ENCODE measurements at regions of chr9 and their contacts with region 1.

Region 1: GRCh38 chr9:70484210-70485130 is 70.0 kb upstream of the KLF9 start:
- DNase-seq: peak; percentile 53
- ATAC-seq: peak; percentile 89
- H3K4me3 ChIP-seq: no peak overlapping the region
- H3K27ac ChIP-seq: no peak overlapping the region
- H3K4me1 ChIP-seq: 0 out of 2 replicates have a peak, but pooled peaks cover 5% of the 10 kb centered on the region
- H3K27me3 ChIP-seq: no peaks in the 10 kb centered on the region
- CTCF ChIP-seq: peak; percentile 66

Region 2: DNA sequence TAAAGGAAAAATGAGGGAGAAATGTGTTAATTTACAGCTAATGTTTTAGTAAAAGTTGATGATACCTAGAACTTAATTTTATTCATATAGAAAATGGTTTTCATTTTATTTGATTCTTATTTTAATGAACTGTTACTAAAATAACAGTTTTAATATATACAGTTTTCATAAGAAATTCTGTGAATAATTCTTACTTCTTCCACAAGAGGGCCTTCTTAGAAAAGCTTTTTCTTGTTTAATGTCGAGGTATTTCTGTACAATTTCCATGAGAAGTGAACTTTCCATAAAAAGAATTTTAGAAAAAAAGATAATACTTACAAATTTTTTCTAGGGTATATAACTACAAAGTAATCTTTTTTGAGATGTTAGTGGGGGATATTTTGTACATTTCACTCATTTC is 143.9 kb before region 1 on chr9:
- CTCF ChIA-PET with region 1: no interaction called
- POLR2A ChIA-PET with region 1: no interaction called
- intact Hi-C with region 1: loop called (anchors 5 kb)
- DNase-seq: peak; percentile 40
- ATAC-seq: no peak
- H3K4me3 ChIP-seq: no peak overlapping the region
- H3K27ac ChIP-seq: no peak overlapping the region
- H3K4me1 ChIP-seq: no peaks in the 10 kb centered on the region
- H3K27me3 ChIP-seq: no peaks in the 10 kb centered on the region
- CTCF ChIP-seq: peak; percentile 52

Region 3: DNA sequence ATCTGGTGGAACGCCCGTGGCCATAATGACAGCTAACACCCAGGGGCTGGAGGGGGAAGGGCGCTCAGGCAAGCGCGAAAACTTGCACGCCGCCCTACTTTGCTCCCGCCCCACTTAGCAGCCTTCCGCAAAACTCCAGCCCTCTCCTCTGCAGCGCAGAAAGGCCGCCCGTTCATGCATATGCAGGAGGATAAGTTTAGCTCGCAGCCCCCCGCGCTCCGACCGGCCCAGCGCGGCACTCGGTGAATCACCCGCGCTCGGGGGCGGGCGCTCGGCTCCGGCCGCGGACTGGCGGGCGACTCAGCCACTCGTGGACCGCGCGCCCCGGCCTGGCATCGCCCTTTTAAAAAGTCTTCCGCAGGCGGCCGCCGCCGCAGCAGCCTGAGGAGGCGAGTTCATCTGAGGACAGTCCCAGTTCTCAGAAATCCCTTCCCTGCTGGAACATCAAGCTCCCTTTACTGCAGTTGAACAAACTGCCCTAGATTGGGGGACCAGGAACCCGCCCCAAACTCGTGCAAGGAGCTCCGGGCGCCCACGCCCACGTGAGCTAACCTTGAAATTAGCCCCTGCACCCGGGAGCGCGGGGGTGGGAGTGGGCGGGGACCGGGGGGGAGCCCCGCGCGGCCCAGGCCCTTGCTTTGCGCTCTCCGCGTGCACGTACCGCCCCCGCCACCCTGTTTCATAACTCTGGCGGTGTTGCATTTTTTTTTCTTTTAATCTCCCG is 65.5 kb before region 1 on chr9:
- CTCF ChIA-PET with region 1: no interaction called
- POLR2A ChIA-PET with region 1: no interaction called
- intact Hi-C with region 1: loop called (anchors 1 kb)
- DNase-seq: peak; percentile 81
- ATAC-seq: peak; percentile 55
- H3K4me3 ChIP-seq: peak overlapping the region; percentile 67
- H3K27ac ChIP-seq: peak overlapping the region; percentile 75
- H3K4me1 ChIP-seq: peaks cover 28% of the 10 kb centered on the region
- H3K27me3 ChIP-seq: peaks cover 13% of the 10 kb centered on the region
- CTCF ChIP-seq: no peak

Measured in PC-3 (cell line).